ENCODE measurements at regions of chr2 and their contacts with region 1.

Region 1: DNA sequence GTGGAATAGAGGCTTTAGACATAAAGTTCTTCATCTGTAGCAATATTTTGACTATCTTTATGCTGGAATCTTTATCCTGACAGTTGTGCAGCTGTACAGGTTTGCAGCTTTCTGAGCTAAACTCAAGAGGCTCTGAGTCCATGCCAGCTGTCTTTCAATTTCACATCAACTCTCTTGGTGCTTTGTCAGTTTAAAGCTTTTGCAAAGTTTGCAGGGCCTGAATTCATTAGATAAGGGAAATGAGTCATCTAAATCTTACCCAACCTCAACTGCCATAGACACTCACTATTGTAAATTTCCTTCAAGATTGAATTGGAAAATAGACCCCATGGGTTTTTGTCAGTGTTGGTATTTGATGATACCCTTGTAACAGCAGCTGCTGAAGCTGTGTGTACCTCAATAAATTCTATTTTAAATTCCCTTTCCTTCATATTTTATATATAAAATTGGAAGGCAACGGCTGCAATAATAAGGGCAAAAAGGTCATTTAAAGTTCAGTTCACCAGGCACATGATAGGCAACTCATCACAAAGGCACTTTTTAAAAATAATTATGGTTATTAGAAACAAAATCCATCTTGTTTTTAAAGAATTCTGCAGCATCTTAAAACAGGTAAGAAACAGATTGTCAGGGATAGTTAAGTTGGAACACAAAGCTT is 169.9 kb upstream of the SLC39A10 start:
- DNase-seq: peak; percentile 54 to 89 (median 64)
- ATAC-seq: peak; percentile 93
- H3K4me3 ChIP-seq: no peak overlapping the region
- H3K27ac ChIP-seq: peak overlapping the region; percentile 91
- H3K4me1 ChIP-seq: peaks cover 3 to 24% of the 10 kb centered on the region in 2 experiments; a peak in 4 of 5 replicates
- H3K27me3 ChIP-seq: no peaks in the 10 kb centered on the region
- CTCF ChIP-seq: no peak
- EP300 ChIP-seq: peak; percentile 99
- POLR2A ChIP-seq: no peak
- RAD21 ChIP-seq: 0 out of 4 replicates have a peak, but pooled peaks of 1 of the 2 experiments have one; percentile 26

Region 2: DNA sequence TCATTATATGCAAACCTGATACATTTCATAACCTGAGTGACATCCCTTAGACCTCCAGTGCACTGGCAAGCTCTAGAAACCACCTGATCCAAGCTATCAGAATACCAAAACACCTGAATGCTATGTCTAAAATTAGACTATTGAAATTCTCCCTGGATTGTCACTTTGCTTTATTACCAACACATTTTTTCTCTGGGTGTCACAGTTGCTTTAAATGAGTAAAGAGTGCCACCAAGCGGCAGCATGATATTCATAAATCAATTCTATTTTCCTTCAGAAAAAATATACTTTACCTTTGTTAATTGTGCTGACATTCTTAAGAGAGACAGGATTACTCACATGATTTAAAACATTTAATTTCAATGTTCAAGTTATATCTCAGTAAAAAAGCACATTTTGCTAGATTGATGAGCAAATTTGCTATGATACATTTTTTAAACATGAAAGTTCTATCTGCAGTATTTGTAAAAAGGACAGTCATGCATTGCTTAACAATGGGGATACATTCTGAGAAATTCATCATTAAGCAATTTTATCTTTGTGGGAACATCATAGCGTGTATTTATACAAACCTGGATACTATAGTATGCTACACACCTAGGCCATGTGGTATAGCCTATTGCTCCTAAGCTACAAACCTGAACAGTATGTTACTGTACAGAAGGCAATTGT is 168.5 kb before region 1 on chr2:
- CTCF ChIA-PET with region 1: no interaction called
- POLR2A ChIA-PET with region 1: interaction called, 3 read pairs
- in situ Hi-C with region 1: no loop called
- intact Hi-C with region 1: loop called (anchors 5 kb)
- DNase-seq: peak; percentile 7 to 68 (median 20)
- ATAC-seq: peak; percentile 69
- H3K4me3 ChIP-seq: no peak overlapping the region
- H3K27ac ChIP-seq: no peak overlapping the region
- H3K4me1 ChIP-seq: no peaks in the 10 kb centered on the region; a peak in 2 of 5 replicates
- H3K27me3 ChIP-seq: no peaks in the 10 kb centered on the region
- CTCF ChIP-seq: peak; percentile 33 to 72 (median 34); a peak in 4 of 6 replicates
- EP300 ChIP-seq: no peak
- POLR2A ChIP-seq: no peak
- RAD21 ChIP-seq: peak; percentile 78 to 79

Region 3: GRCh38 chr2:195352581-195352980 is 134.5 kb before region 1 on chr2:
- CTCF ChIA-PET with region 1: no interaction called
- POLR2A ChIA-PET with region 1: no interaction called
- in situ Hi-C with region 1: no loop called
- intact Hi-C with region 1: no loop called
- DNase-seq: peak in 1 of 4 experiments; percentile 25
- ATAC-seq: no peak
- H3K4me3 ChIP-seq: no peak overlapping the region
- H3K27ac ChIP-seq: peak overlapping the region; percentile 43; the same call in 2 of the 3 replicates
- H3K4me1 ChIP-seq: peaks cover 0 to 2% of the 10 kb centered on the region in 2 experiments; a peak in 2 of 5 replicates
- H3K27me3 ChIP-seq: no peaks in the 10 kb centered on the region
- CTCF ChIP-seq: no peak
- EP300 ChIP-seq: peak; percentile 59; the same call in 1 of the 2 replicates
- POLR2A ChIP-seq: no peak
- RAD21 ChIP-seq: no peak

Region 4: GRCh38 chr2:195368249-195369217 is 118.6 kb before region 1 on chr2:
- CTCF ChIA-PET with region 1: no interaction called
- POLR2A ChIA-PET with region 1: no interaction called
- in situ Hi-C with region 1: no loop called
- intact Hi-C with region 1: loop called (anchors 2 kb)
- DNase-seq: peak in 2 of 4 experiments; percentile 8 to 77
- ATAC-seq: peak; percentile 74
- H3K4me3 ChIP-seq: no peak overlapping the region; the same call in 1 of the 2 replicates
- H3K27ac ChIP-seq: peak overlapping the region; percentile 80
- H3K4me1 ChIP-seq: peaks cover 4 to 14% of the 10 kb centered on the region in 2 experiments; a peak in 3 of 5 replicates
- H3K27me3 ChIP-seq: no peaks in the 10 kb centered on the region
- CTCF ChIP-seq: no peak
- EP300 ChIP-seq: peak; percentile 55; the same call in 1 of the 2 replicates
- POLR2A ChIP-seq: no peak
- RAD21 ChIP-seq: no peak

Region 5: DNA sequence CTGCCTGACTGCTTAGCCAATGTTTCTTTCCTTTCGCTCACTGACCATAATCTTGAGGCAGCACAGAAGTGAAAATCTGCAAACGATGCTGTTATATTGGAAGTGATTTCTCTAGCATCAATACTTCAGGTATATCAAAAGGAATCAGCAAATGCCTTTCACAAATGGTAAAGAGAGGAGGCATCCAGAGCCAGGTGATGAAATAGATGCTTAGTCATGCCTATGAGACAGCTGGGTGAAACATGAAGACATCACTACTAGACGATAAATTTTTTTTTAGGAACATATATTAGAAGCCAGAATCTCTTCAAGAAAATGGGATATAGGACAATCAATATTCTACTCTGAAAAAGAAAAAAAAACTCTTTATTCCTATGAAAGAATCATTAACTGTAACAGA is 79.3 kb before region 1 on chr2:
- CTCF ChIA-PET with region 1: interaction called, 3 read pairs
- POLR2A ChIA-PET with region 1: no interaction called
- in situ Hi-C with region 1: no loop called
- intact Hi-C with region 1: loop called (anchors 5 kb)
- DNase-seq: peak in 2 of 4 experiments; percentile 18 to 38
- ATAC-seq: peak; percentile 68
- H3K4me3 ChIP-seq: no peak overlapping the region
- H3K27ac ChIP-seq: peak overlapping the region; percentile 69; the same call in 1 of the 3 replicates
- H3K4me1 ChIP-seq: peaks cover 0 to 10% of the 10 kb centered on the region in 2 experiments; a peak in 2 of 5 replicates
- H3K27me3 ChIP-seq: no peaks in the 10 kb centered on the region
- CTCF ChIP-seq: no peak
- EP300 ChIP-seq: no peak
- POLR2A ChIP-seq: no peak
- RAD21 ChIP-seq: no peak

Region 6: GRCh38 chr2:195513119-195513518 is 26.0 kb after region 1 on chr2:
- CTCF ChIA-PET with region 1: no interaction called
- POLR2A ChIA-PET with region 1: no interaction called
- in situ Hi-C with region 1: no loop called
- intact Hi-C with region 1: loop called (anchors 1 kb)
- DNase-seq: peak in 2 of 4 experiments; percentile 76 to 91
- ATAC-seq: peak; percentile 91
- H3K4me3 ChIP-seq: no peak overlapping the region
- H3K27ac ChIP-seq: peak overlapping the region; percentile 88
- H3K4me1 ChIP-seq: peaks cover 12 to 28% of the 10 kb centered on the region in 2 experiments
- H3K27me3 ChIP-seq: no peaks in the 10 kb centered on the region
- CTCF ChIP-seq: 0 out of 6 replicates have a peak, but pooled peaks of 1 of the 3 experiments have one; percentile 1
- EP300 ChIP-seq: peak; percentile 94
- POLR2A ChIP-seq: no peak
- RAD21 ChIP-seq: peak; percentile 43 to 47; a peak in 3 of 4 replicates

Region 7: GRCh38 chr2:195543902-195544894 is 57.1 kb after region 1 on chr2:
- CTCF ChIA-PET with region 1: no interaction called
- POLR2A ChIA-PET with region 1: no interaction called
- in situ Hi-C with region 1: no loop called
- intact Hi-C with region 1: no loop called
- DNase-seq: no peak
- ATAC-seq: no peak; the same call in 2 of the 3 replicates
- H3K4me3 ChIP-seq: no peak overlapping the region
- H3K27ac ChIP-seq: no peak overlapping the region
- H3K4me1 ChIP-seq: no peaks in the 10 kb centered on the region
- H3K27me3 ChIP-seq: no peaks in the 10 kb centered on the region
- CTCF ChIP-seq: no peak
- EP300 ChIP-seq: no peak
- POLR2A ChIP-seq: no peak
- RAD21 ChIP-seq: no peak

Region 8: DNA sequence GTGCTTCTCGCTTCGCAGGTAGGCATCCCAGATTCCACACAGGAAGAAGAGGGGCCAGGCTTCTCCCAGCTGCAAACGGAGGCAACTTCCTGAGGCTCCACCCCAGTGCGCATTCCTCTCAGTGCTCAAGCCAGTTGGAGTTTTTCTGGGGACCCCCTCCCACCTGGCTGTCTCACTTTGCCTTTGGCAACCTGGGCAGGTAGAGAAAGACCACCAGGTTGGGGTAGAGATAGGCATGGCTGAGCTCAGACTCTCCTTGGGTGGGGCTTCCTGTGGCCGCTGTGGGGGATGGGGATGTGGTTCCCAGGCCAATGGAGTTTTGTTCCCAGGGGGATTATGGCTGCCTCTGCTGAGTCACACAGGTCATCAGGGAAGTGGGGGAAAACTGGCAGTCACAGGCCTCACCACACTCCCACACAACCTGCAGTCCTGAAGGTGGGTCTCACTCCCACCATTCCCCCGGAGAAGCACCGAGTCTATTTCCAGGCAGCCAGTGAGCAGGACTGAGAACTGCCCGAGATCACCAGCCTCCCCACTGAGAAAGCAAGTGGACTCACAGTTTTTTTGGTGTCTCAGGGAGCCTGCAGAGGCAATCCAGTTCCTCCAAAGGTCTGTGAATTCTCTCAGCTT is 208.0 kb after region 1 on chr2:
- CTCF ChIA-PET with region 1: no interaction called
- POLR2A ChIA-PET with region 1: no interaction called
- in situ Hi-C with region 1: no loop called
- intact Hi-C with region 1: no loop called
- DNase-seq: peak in 3 of 4 experiments; percentile 6 to 41 (median 14)
- ATAC-seq: peak; percentile 82
- H3K4me3 ChIP-seq: no peak overlapping the region
- H3K27ac ChIP-seq: peak overlapping the region; percentile 62; the same call in 2 of the 3 replicates
- H3K4me1 ChIP-seq: peaks cover 0 to 6% of the 10 kb centered on the region in 2 experiments; a peak in 3 of 5 replicates
- H3K27me3 ChIP-seq: no peaks in the 10 kb centered on the region
- CTCF ChIP-seq: no peak
- EP300 ChIP-seq: no peak
- POLR2A ChIP-seq: no peak
- RAD21 ChIP-seq: no peak